K562 (cell line): ENCODE measurements at regions of chr1 and their contacts with region 1.

Region 1: DNA sequence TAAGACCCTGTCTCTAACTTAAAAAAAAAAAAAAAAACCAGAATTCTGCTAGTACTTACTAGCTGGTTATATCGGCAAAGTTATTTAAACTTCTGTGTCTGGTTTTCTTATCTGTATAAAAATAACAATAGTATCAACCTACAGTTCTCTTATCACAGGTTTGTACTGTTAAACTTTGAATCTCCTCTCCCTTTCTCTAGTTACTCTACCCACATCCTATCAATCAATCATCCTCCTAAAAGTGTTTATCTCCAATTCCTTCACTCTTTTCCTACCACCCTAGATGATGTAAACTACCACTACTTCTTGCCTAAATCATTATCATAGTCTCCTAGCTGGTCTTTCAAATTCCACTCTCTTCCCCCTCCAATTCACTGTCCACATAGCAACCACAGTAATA is 27.6 kb downstream of the USP33 start:
- DNase-seq: no peak
- ATAC-seq: peak; percentile 24
- H3K4me3 ChIP-seq: no peak overlapping the region
- H3K27ac ChIP-seq: no peak overlapping the region
- H3K4me1 ChIP-seq: peaks cover 10 to 11% of the 10 kb centered on the region in 2 experiments; a peak in 4 of 5 replicates
- H3K27me3 ChIP-seq: no peaks in the 10 kb centered on the region
- CTCF ChIP-seq: no peak
- EP300 ChIP-seq: no peak
- POLR2A ChIP-seq: no peak
- RAD21 ChIP-seq: no peak

Region 2: DNA sequence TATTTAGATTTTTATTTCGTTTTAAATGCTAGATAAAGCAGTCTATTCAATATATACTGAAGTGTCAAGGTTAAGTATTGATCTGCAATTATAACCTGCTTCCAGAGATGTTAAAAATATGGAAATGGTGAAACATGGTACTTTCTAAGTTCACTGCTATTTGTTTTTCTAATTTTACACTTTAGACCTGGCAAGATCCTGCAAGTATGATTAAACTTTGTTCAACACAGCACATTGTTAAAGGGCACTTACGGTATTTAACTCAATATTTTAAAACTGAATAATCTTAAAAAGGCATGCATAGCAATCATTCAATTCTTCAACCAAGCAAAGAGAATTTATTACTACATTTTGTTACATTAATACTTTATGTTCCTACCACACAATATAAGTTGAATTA is 13.9 kb before region 1 on chr1:
- CTCF ChIA-PET with region 1: no interaction called
- POLR2A ChIA-PET with region 1: interaction called, 12 read pairs
- in situ Hi-C with region 1: no loop called
- intact Hi-C with region 1: no loop called
- DNase-seq: no peak
- ATAC-seq: no peak
- H3K4me3 ChIP-seq: no peak overlapping the region
- H3K27ac ChIP-seq: no peak overlapping the region
- H3K4me1 ChIP-seq: no peaks in the 10 kb centered on the region
- H3K27me3 ChIP-seq: no peaks in the 10 kb centered on the region
- CTCF ChIP-seq: no peak
- EP300 ChIP-seq: no peak
- POLR2A ChIP-seq: no peak
- RAD21 ChIP-seq: no peak